ENCODE measurements at regions of chr3 and their contacts with region 1.

Region 1: GRCh38 chr3:188954590-188955208 is 217.1 kb upstream of the TPRG1 start:
- DNase-seq: peak; percentile 71 to 75 (median 75)
- H3K4me3 ChIP-seq: no peak overlapping the region
- H3K27ac ChIP-seq: no peak overlapping the region
- H3K4me1 ChIP-seq: no peaks in the 10 kb centered on the region
- H3K27me3 ChIP-seq: peaks cover 0 to 4% (median 0%) of the 10 kb centered on the region in 5 experiments

Region 2: DNA sequence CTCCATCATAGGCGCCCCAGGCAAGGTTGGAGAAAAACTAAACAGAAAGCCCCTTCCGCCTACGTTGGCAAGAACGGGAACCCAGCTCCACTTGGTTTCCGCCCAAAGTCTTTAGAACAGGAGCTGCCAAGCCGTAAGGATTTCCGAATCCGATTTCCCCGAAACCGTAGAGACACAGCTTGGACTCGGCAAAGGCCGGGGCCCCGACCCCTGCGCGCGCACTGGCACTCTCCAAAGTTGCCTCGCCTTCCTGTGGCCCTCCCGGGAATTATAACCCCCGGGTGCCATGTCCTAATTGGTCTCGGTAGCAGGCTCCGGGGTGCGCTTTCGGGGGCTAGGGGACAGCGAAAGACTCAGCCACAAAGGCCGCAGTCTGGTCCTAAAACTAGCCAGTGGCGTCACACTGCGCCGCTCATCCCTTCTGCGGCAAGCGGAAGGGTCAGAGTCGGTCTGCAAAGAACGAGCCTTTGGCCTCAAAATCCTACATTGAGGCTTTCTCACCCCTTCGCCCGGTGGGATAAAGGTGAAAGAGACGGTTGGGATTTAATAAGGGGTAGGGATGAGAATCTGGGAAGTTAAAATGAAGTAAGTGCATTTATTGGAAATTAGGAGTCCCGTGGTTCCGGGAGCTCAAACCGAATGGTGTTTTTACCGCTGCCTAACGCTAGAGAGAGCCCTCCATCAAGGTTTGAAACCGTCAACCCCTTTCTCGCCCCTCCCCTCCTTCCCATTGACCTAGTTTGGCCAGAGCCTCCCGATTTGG is 1216.2 kb before region 1 on chr3:
- CTCF ChIA-PET with region 1: interaction called, 332 read pairs
- POLR2A ChIA-PET with region 1: no interaction called
- DNase-seq: peak; percentile 73 to 80 (median 80)
- H3K4me3 ChIP-seq: peak overlapping the region; percentile 70 to 99 (median 86)
- H3K27ac ChIP-seq: no peak overlapping the region
- H3K4me1 ChIP-seq: peaks cover 19 to 72% (median 63%) of the 10 kb centered on the region in 4 experiments
- H3K27me3 ChIP-seq: peaks cover 0 to 6% (median 1%) of the 10 kb centered on the region in 5 experiments

Region 3: GRCh38 chr3:188937389-188937788 is 17.3 kb before region 1 on chr3:
- CTCF ChIA-PET with region 1: interaction called, 10 read pairs
- POLR2A ChIA-PET with region 1: no interaction called
- DNase-seq: no peak
- H3K4me3 ChIP-seq: no peak overlapping the region
- H3K27ac ChIP-seq: no peak overlapping the region
- H3K4me1 ChIP-seq: no peaks in the 10 kb centered on the region
- H3K27me3 ChIP-seq: no peaks in the 10 kb centered on the region

Region 4: GRCh38 chr3:189041482-189042090 is 86.9 kb after region 1 on chr3:
- CTCF ChIA-PET with region 1: interaction called, 26 read pairs
- POLR2A ChIA-PET with region 1: no interaction called
- DNase-seq: peak; percentile 69 to 86 (median 84)
- H3K4me3 ChIP-seq: no peak overlapping the region
- H3K27ac ChIP-seq: no peak overlapping the region
- H3K4me1 ChIP-seq: no peaks in the 10 kb centered on the region
- H3K27me3 ChIP-seq: no peaks in the 10 kb centered on the region

Region 5: GRCh38 chr3:189071441-189071840 is 116.7 kb after region 1 on chr3:
- CTCF ChIA-PET with region 1: no interaction called
- POLR2A ChIA-PET with region 1: no interaction called
- DNase-seq: no peak
- H3K4me3 ChIP-seq: no peak overlapping the region
- H3K27ac ChIP-seq: no peak overlapping the region
- H3K4me1 ChIP-seq: no peaks in the 10 kb centered on the region
- H3K27me3 ChIP-seq: peaks cover 0 to 1% (median 0%) of the 10 kb centered on the region in 5 experiments

Region 6: DNA sequence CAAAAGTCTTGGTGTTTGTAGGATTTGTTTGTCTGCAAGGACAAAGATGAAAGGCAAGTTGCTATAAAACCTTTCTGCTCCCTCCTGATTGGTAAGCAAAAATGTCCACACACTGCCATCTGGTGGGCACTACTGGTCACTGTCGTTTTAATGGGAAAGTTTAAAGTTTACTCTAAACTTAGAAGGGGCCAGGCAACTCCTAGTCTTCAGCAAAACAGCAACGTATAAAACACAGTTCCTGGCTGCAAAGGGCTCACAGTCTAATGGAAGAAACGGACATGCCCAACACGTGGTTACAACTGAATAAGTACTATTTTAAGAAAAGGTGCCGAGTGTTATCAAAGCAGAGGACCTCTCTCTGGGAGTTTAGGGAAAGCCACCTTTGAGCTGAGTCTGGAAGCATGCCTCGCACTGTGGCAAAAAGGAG is 193.4 kb after region 1 on chr3:
- CTCF ChIA-PET with region 1: interaction called, 30 read pairs
- POLR2A ChIA-PET with region 1: no interaction called
- DNase-seq: peak; percentile 57 to 77 (median 70)
- H3K4me3 ChIP-seq: no peak overlapping the region
- H3K27ac ChIP-seq: no peak overlapping the region
- H3K4me1 ChIP-seq: peaks cover 0 to 5% (median 2%) of the 10 kb centered on the region in 4 experiments
- H3K27me3 ChIP-seq: peaks cover 0 to 5% (median 0%) of the 10 kb centered on the region in 5 experiments

Measured in common myeloid progenitor, CD34-positive (primary cell).